HEK293 (cell line): ENCODE measurements at regions of chr19 and their contacts with region 1.

Region 1: GRCh38 chr19:33998739-33999345 is 173.5 kb upstream of the LSM14A start:
- H3K4me3 ChIP-seq: no peak overlapping the region
- H3K27ac ChIP-seq: no peak overlapping the region
- H3K4me1 ChIP-seq: 0 out of 2 replicates have a peak, but pooled peaks cover 4% of the 10 kb centered on the region
- CTCF ChIP-seq: peak; percentile 60

Region 2: GRCh38 chr19:33785795-33786194 is 213.0 kb before region 1 on chr19:
- CTCF ChIA-PET with region 1: interaction called, 11 read pairs
- POLR2A ChIA-PET with region 1: no interaction called
- H3K4me3 ChIP-seq: no peak overlapping the region
- H3K27ac ChIP-seq: no peak overlapping the region
- H3K4me1 ChIP-seq: no peaks in the 10 kb centered on the region
- CTCF ChIP-seq: no peak

Region 3: GRCh38 chr19:33947265-33947964 is 51.4 kb before region 1 on chr19:
- CTCF ChIA-PET with region 1: interaction called, 16 read pairs
- POLR2A ChIA-PET with region 1: no interaction called
- H3K4me3 ChIP-seq: no peak overlapping the region
- H3K27ac ChIP-seq: no peak overlapping the region
- H3K4me1 ChIP-seq: no peaks in the 10 kb centered on the region
- CTCF ChIP-seq: no peak

Region 4: GRCh38 chr19:33982706-33983105 is 16.1 kb before region 1 on chr19:
- CTCF ChIA-PET with region 1: interaction called, 18 read pairs
- POLR2A ChIA-PET with region 1: no interaction called
- H3K4me3 ChIP-seq: no peak overlapping the region
- H3K27ac ChIP-seq: no peak overlapping the region
- H3K4me1 ChIP-seq: no peaks in the 10 kb centered on the region
- CTCF ChIP-seq: no peak

Region 5: DNA sequence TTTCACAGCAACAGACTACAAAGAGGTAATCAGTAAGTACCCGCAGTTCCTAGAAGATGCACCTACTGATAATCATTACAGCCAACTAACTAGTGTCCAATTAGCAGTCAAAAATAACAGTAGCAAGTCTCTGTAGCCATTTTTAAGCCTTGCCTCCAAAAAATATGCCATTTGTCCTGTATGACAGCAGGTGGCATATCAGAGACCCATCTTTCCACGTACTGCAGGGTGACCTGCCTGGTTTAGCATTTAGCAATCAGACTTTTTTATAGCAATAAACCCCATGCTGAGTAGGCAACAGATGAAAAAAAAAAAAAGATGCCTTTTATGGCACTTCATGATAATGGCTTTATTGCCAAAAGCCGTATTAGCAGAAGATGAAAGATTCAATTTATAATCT is 18.2 kb after region 1 on chr19:
- CTCF ChIA-PET with region 1: interaction called, 14 read pairs
- POLR2A ChIA-PET with region 1: no interaction called
- H3K4me3 ChIP-seq: no peak overlapping the region
- H3K27ac ChIP-seq: no peak overlapping the region
- H3K4me1 ChIP-seq: peaks cover 6% of the 10 kb centered on the region; the same call in 1 of the 2 replicates
- CTCF ChIP-seq: peak; percentile 72

Region 6: GRCh38 chr19:34075661-34076091 is 76.8 kb after region 1 on chr19:
- CTCF ChIA-PET with region 1: no interaction called
- POLR2A ChIA-PET with region 1: no interaction called
- H3K4me3 ChIP-seq: no peak overlapping the region
- H3K27ac ChIP-seq: no peak overlapping the region
- H3K4me1 ChIP-seq: no peaks in the 10 kb centered on the region
- CTCF ChIP-seq: no peak

Region 7: DNA sequence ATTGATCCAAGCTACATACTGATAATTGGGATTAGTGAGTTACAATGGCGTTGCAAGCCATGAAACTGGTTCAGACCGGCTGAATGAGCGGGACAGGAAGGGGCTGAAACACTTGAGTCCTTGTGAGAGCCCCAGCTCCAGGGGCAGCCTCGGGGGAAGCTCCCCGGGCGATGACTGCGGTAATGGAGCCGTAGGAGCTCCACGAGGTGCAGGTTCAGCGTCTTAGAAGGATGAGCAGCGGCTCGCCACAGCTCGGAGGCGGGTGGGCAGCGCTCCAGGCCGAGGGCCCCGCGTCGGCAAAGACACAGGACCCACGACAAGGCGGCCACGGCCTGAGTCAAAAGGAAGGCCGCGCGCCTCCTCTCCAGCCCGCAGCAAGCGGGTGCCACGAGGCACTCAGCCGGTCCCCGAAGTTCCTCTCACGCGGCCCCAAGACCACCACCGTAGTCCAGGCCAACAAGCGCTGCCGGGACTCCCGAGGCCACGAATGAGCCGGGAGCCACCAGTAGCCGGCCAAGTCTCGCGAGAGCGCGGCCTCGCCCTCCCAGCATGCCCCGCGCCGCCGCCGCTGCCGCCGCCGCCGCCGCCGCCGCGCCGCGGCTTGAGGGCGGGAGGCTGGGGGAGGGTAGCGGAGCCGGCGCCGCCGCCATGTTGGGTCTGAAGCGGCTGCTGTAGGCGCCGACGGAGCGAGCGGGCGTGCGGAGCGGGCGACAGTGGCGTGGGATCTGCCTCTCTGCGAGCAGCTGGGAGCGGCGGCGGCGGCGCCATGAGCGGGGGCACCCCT is 173.2 kb after region 1 on chr19 and contains the start of gene LSM14A:
- CTCF ChIA-PET with region 1: interaction called, 3 read pairs
- POLR2A ChIA-PET with region 1: interaction called, 10 read pairs
- H3K4me3 ChIP-seq: peak within 1 kb of the TSS; percentile 85
- H3K27ac ChIP-seq: peak within 1 kb of the TSS; percentile 100
- H3K4me1 ChIP-seq: peaks cover 37% of the 10 kb centered on the region
- CTCF ChIP-seq: peak; percentile 20